ENCODE measurements at regions of chr20 and their contacts with region 1.

Region 1: GRCh38 chr20:35207950-35208611 is 18.4 kb upstream of the MMP24 start:
- DNase-seq: peak; percentile 84 to 95 (median 89)
- H3K4me3 ChIP-seq: peak overlapping the region in 3 of 4 donors; percentile 13 to 32 (median 19)
- H3K27ac ChIP-seq: peak overlapping the region; percentile 33 to 79 (median 77)
- H3K4me1 ChIP-seq: peaks cover 6 to 14% of the 10 kb centered on the region in 2 donors
- H3K27me3 ChIP-seq: no peaks in the 10 kb centered on the region
- CTCF ChIP-seq: peak; percentile 82 to 98 (median 92)
- POLR2A ChIP-seq: no peak

Region 2: DNA sequence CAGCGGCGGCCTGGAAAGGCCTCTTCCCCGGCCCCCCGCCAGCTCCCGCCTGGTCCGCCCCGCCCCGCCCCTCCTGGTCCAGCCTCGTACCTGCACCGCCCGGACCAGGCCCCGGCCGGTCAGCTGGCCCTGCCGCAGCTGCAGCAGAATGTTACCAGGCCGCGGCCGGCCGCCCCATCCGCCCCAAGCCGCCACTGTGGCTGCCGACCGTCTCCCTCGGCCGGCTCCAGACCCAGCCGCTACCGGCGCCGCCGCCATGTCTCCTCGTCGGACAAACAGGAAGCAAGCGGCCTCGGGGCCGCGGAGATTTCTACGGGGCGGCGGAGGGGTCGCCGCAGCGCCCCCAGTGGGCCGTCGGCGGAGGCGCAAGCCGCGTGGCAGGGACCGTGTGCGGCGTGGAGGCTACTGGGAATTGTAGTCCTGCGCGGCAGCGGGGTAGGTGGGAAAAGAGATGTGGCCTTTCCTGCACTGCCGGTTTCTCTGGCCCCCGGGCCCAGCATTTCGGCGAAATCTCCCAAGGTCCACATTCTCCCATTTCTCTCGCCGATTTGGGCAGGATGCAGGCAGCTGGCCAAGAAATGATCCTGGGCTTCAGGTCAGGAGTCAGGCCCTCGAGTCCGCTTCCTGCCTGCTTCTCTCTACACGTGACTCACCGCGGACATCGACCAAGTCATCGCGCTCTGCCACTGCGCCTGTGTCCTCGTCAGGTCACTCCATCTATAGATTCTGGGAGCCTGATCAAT is 115.4 kb before region 1 on chr20 and contains the start of gene TRPC4AP:
- intact Hi-C with region 1: loop called (anchors 5 kb)
- DNase-seq: peak; percentile 85 to 94 (median 89)
- H3K4me3 ChIP-seq: peak within 1 kb of the TSS; percentile 28 to 97 (median 86)
- H3K27ac ChIP-seq: peak within 1 kb of the TSS; percentile 74 to 95 (median 93)
- H3K4me1 ChIP-seq: peaks cover 26 to 46% of the 10 kb centered on the region in 2 donors
- H3K27me3 ChIP-seq: no peaks in the 10 kb centered on the region
- CTCF ChIP-seq: peak; percentile 82 to 99 (median 92)
- POLR2A ChIP-seq: peak; percentile 66 to 80
- total RNA-seq, gene TRPC4AP: 33.8 to 87.2 (median 80.5) TPM

Region 3: GRCh38 chr20:35146920-35147574 is 61.0 kb before region 1 on chr20 and contains the start of gene EDEM2:
- intact Hi-C with region 1: loop called in 1 of 2 experiments (anchors 10 kb)
- DNase-seq: peak; percentile 92 to 97 (median 95)
- H3K4me3 ChIP-seq: peak within 1 kb of the TSS; percentile 12 to 88 (median 62)
- H3K27ac ChIP-seq: peak within 1 kb of the TSS; percentile 12 to 88 (median 59)
- H3K4me1 ChIP-seq: peaks cover 10 to 24% of the 10 kb centered on the region in 2 donors
- H3K27me3 ChIP-seq: no peaks in the 10 kb centered on the region
- CTCF ChIP-seq: no peak
- POLR2A ChIP-seq: peak in 1 of 2 donors; percentile 73
- total RNA-seq, gene EDEM2: 29.3 to 62.5 (median 38.1) TPM

Measured in adrenal gland (tissue), 19 donors.